T-cell (primary cell): ENCODE measurements at regions of chr6 and their contacts with region 1.

Region 1: DNA sequence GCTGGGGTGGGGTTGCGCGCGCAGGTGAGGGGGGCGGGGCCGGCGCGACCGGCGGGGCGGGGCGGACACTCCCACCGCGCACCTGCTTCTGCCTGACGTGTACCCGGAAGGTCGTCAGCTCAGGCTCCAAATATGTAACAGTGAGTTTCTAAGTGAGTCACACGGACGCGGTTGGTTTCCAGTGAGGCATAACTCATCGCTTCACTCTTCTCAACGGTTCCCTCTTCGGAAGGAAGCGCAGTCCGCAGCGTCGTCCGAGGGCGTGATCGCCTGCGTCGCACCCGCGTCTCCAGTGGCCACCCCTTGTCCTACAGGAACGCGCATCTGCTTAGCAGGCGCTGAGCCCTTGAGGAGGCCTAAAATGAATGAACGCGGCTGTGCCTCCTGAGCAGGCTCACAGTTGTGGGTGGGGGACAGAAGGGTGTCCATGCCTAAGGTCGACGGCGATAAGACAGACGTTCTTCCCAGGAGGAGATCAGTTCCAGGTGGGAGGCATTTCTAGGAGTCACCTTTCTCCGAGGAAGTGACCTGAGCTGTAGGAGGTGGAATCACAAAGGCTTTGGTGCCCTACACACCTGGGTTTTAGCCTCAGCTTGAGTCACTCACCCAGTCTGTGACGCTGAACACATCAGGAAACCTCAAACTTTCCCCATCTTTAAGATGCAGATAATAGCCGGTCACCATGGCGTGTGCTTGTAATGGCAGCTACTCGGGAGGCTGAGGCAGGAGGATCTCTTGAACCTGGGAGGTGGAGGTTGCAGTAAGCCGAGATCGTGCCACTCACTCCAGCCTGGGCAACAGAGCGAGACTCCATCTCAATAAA is 50.9 kb upstream of the EZR start:
- DNase-seq: peak in 24 of 35 experiments; percentile 25 to 98 (median 94)
- ATAC-seq: peak; percentile 85 to 88 (median 88)
- H3K4me3 ChIP-seq: peak overlapping the region; percentile 44 to 79
- H3K4me3 Mint-ChIP-seq: peak overlapping the region; percentile 85 to 88 (median 85)
- H3K27ac ChIP-seq: peak overlapping the region; percentile 100
- H3K27ac Mint-ChIP-seq: peak overlapping the region; percentile 99
- H3K4me1 ChIP-seq: peaks cover 10 to 24% of the 10 kb centered on the region in 2 experiments
- H3K4me1 Mint-ChIP-seq: peaks cover 26 to 43% (median 28%) of the 10 kb centered on the region in 3 donors
- H3K27me3 ChIP-seq: no peaks in the 10 kb centered on the region
- H3K27me3 Mint-ChIP-seq: no peaks in the 10 kb centered on the region

Region 2: DNA sequence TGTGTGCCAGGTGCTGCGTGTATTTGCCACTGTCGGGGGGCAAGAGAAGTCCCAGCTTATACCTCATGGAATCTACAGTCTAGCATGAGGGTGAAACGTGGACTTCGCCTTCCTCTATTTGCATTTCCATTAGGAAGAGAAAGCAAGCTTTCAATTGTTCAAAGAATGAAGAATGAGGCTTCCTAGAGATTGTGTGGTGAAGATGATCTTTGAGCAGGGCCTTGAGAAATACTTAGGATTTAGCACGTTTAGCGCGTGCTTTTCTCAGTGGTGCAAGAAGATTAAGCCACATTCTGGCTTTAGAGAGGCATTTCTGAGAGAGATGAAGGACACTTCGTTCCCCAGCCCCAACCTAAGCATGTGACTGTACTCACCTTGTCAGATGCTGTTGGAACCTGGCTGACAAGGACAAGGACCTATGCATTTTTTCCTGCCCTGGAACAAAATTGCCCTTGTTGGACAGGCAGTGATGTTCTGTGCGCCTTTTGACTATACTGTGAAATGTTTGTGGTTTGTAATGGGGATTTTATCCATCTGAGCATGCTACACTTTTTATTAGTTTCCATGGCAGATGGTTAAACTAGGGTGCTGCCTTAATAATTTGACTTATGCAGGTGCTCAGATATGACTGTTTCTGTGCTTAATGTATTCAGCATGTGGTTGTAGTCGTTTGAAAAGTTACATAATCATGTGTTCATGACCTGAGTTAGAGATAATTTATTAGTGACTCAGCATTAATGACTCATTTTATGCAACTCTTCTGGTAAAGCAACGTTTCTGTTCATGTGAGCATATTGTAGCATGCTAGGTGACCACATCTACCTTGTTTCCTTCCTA is 547.1 kb before region 1 on chr6:
- CTCF ChIA-PET with region 1: no interaction called
- POLR2A ChIA-PET with region 1: interaction called in 1 of 2 experiments, 13 read pairs
- DNase-seq: no peak
- ATAC-seq: peak in 1 of 4 experiments; percentile 19
- H3K4me3 ChIP-seq: no peak overlapping the region
- H3K4me3 Mint-ChIP-seq: no peak overlapping the region
- H3K27ac ChIP-seq: no peak overlapping the region
- H3K27ac Mint-ChIP-seq: no peak overlapping the region
- H3K4me1 ChIP-seq: peaks cover 5 to 6% of the 10 kb centered on the region in 2 experiments
- H3K4me1 Mint-ChIP-seq: peaks cover 62 to 73% (median 68%) of the 10 kb centered on the region in 3 donors
- H3K27me3 ChIP-seq: no peaks in the 10 kb centered on the region
- H3K27me3 Mint-ChIP-seq: no peaks in the 10 kb centered on the region

Region 3: DNA sequence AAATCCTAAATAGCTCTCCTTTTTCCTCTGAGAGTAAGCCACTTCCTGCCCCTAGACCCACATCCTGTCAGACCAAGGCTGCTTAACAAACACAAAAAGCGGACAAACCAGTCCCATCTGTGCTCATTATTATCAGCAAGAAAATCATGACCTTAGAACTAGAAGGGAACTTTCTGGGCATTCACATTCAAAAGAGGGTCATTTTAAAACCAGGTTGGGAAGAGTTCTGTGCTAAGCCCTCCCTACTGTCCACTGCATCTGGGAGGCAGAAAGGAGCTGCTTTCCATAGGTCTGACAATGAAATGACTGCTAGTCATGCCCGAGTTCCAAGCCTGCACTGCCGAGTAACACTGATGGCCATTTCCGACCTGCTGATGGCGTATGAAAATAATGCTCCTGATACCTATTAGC is 66.3 kb before region 1 on chr6:
- CTCF ChIA-PET with region 1: interaction called in 1 of 2 experiments, 14 read pairs
- POLR2A ChIA-PET with region 1: interaction called, 6 to 24 read pairs
- DNase-seq: peak in 29 of 35 experiments; percentile 19 to 72 (median 41)
- ATAC-seq: peak; percentile 43 to 86 (median 78)
- H3K4me3 ChIP-seq: peak overlapping the region in 1 of 2 donors; percentile 31
- H3K4me3 Mint-ChIP-seq: peak overlapping the region; percentile 70 to 79 (median 76)
- H3K27ac ChIP-seq: peak overlapping the region; percentile 78
- H3K27ac Mint-ChIP-seq: peak overlapping the region; percentile 90 to 91
- H3K4me1 ChIP-seq: peaks cover 35 to 72% of the 10 kb centered on the region in 2 experiments
- H3K4me1 Mint-ChIP-seq: peaks cover 93 to 100% (median 96%) of the 10 kb centered on the region in 3 donors
- H3K27me3 ChIP-seq: no peaks in the 10 kb centered on the region
- H3K27me3 Mint-ChIP-seq: no peaks in the 10 kb centered on the region

Region 4: DNA sequence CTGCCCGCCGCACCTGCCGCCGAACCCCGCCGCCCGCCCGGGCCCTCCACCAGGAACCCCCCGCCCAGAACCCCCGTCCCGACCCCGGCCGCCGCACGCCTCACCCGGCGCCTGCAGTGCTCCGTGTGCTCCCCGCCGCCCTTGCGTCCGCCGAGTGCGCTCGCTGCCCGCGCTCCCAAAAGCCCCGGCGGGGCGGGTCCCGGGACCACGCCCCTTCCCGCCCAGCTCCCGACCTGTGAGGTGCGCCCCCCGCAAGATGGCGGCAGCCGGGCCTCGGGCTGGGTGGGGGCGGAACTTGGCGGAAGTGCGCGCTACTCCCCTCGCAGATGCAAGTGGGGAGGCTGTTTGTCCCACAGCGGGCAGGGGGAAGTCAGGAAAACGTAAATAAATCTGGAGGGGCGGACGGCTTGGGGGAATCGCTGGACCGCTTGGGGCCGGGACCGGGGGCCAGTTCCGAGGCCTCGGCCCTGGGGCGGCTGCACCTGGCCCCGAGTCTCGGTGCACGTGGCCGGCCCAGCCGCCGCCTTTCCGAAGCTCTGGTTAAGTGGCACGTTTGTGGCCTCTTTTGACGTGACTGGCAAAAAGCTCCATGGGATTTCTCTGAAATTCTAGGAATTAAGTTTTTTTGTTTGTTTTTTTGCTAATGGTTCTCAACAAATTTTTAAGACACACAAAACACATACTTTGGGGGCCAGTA is 50.7 kb before region 1 on chr6 and contains the start of gene EZR:
- CTCF ChIA-PET with region 1: interaction called in 1 of 2 experiments, 9 read pairs
- POLR2A ChIA-PET with region 1: interaction called, 11 to 52 read pairs
- DNase-seq: peak; percentile 69 to 92 (median 83)
- ATAC-seq: peak; percentile 60 to 75 (median 66)
- H3K4me3 ChIP-seq: peak within 1 kb of the TSS; percentile 83 to 88
- H3K4me3 Mint-ChIP-seq: peak within 1 kb of the TSS; percentile 77 to 98 (median 98)
- H3K27ac ChIP-seq: peak within 1 kb of the TSS; percentile 98
- H3K27ac Mint-ChIP-seq: peak within 1 kb of the TSS; percentile 85 to 87
- H3K4me1 ChIP-seq: peaks cover 17 to 32% of the 10 kb centered on the region in 2 experiments
- H3K4me1 Mint-ChIP-seq: peaks cover 35 to 49% (median 36%) of the 10 kb centered on the region in 3 donors
- H3K27me3 ChIP-seq: no peaks in the 10 kb centered on the region
- H3K27me3 Mint-ChIP-seq: no peaks in the 10 kb centered on the region
- total RNA-seq, gene EZR: 176 to 286 (median 272) TPM

Region 5: DNA sequence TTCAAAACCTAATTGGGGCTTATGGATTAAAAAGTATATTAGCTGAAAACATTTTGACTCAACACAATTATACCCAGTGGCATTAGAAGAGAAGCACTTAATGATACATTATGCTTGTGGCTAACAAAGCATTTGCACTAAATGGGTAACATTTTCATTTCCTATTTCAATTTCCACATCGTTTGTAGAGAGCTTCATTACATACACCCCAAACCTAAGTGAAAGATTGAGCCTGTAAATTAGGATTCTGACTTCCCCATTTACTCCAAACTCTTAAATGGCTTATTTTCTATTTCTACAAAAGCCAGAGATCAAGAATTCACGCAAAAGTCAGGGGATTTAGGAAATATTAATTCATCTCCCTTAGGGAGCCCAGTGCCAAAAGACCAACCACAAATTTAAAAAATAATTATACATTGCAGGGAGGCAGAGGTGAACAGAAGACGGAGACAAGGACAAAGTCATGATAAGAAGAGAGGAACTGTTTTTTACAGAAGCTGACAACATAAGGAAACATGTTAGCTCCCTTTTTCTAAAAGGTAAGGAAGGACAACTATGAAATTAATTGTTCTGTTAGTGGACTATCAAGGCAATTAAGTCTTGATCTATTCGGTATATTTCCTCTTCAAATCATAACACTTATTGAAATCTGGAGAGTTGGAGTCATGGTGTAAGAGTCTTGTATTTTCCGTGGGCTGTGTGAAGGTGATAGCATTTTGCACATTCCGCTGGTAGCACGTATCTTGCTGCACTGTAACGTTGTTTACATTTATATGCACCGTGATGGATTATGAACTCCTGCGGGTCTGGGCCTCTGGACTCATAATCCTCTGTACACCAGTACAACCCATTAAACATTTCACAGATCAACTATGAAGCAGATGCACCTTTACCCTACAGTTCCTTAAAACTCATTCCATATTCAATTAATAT is 26.0 kb before region 1 on chr6:
- CTCF ChIA-PET with region 1: interaction called in 1 of 2 experiments, 8 read pairs
- POLR2A ChIA-PET with region 1: interaction called, 3 to 13 read pairs
- DNase-seq: no peak
- ATAC-seq: no peak
- H3K4me3 ChIP-seq: no peak overlapping the region
- H3K4me3 Mint-ChIP-seq: no peak overlapping the region
- H3K27ac ChIP-seq: no peak overlapping the region
- H3K27ac Mint-ChIP-seq: peak overlapping the region in 1 of 2 donors; percentile 36
- H3K4me1 ChIP-seq: no peaks in the 10 kb centered on the region
- H3K4me1 Mint-ChIP-seq: peaks cover 5 to 17% (median 8%) of the 10 kb centered on the region in 3 donors
- H3K27me3 ChIP-seq: no peaks in the 10 kb centered on the region
- H3K27me3 Mint-ChIP-seq: no peaks in the 10 kb centered on the region

Region 6: GRCh38 chr6:158972241-158973233 is 102.5 kb after region 1 on chr6:
- CTCF ChIA-PET with region 1: interaction called in 1 of 2 experiments, 3 read pairs
- POLR2A ChIA-PET with region 1: interaction called in 1 of 2 experiments, 12 read pairs
- DNase-seq: peak in 2 of 35 experiments; percentile 7 to 78
- ATAC-seq: peak; percentile 43 to 70 (median 63)
- H3K4me3 ChIP-seq: no peak overlapping the region
- H3K4me3 Mint-ChIP-seq: no peak overlapping the region
- H3K27ac ChIP-seq: no peak overlapping the region
- H3K27ac Mint-ChIP-seq: no peak overlapping the region
- H3K4me1 ChIP-seq: no peaks in the 10 kb centered on the region
- H3K4me1 Mint-ChIP-seq: peaks cover 0 to 2% (median 0%) of the 10 kb centered on the region in 3 donors
- H3K27me3 ChIP-seq: no peaks in the 10 kb centered on the region
- H3K27me3 Mint-ChIP-seq: no peaks in the 10 kb centered on the region